Ovary (tissue), 10 donors: ENCODE measurements at regions of chr3 and their contacts with region 1.

Region 1: DNA sequence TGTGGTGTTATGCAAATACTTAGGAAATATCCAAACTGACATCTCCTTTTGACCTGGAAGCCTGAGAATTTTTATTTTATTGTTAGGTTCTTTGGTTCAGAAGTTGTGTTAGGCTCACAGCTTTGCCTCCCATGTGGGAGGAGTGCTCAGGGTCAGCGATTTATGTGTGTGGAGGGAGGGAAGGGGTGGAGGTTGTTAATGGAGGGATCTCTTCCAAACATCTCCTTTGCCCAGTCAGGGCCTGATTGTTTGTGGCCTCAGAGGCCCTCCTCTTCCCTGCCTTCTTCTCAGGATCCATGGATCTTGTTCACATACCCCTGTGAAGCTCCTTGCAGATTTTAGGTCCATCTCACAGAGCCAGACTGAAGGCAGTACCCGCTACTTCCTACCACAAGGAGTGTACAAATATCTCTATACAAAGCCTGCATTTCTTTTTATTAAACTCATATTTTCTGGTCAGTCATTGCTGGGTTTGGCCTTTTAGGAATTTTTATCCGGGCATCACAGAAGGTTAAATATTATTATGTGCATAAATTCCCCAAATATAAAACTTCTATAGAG is 40.3 kb downstream of the BBX start:
- DNase-seq: no peak
- H3K4me3 ChIP-seq: no peak overlapping the region
- H3K27ac ChIP-seq: no peak overlapping the region
- H3K4me1 ChIP-seq: peaks cover 8% of the 10 kb centered on the region
- H3K27me3 ChIP-seq: no peaks in the 10 kb centered on the region
- CTCF ChIP-seq: no peak
- EP300 ChIP-seq: no peak
- POLR2A ChIP-seq: no peak

Region 2: DNA sequence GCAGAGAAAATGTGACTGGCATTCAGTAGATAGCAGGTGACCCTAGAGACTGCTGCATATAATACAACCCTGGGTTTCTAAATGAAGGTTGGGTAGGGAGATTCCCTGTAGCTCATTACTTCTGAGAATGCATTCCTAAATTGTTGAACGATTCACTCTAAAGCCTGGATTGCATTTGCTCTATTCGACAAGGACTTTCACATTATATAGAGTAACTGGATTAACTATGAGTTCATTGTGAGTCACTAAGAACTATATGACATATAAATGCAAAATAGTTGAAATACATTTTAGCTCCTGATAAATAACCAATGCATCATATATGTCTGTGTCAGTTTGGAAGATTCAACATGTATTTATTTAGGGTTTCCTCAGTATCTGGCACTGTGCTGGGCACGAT is 480.5 kb before region 1 on chr3:
- intact Hi-C with region 1: no loop called
- DNase-seq: no peak
- H3K4me3 ChIP-seq: no peak overlapping the region
- H3K27ac ChIP-seq: no peak overlapping the region
- H3K4me1 ChIP-seq: no peaks in the 10 kb centered on the region
- H3K27me3 ChIP-seq: no peaks in the 10 kb centered on the region
- CTCF ChIP-seq: no peak
- EP300 ChIP-seq: no peak
- POLR2A ChIP-seq: no peak

Region 3: DNA sequence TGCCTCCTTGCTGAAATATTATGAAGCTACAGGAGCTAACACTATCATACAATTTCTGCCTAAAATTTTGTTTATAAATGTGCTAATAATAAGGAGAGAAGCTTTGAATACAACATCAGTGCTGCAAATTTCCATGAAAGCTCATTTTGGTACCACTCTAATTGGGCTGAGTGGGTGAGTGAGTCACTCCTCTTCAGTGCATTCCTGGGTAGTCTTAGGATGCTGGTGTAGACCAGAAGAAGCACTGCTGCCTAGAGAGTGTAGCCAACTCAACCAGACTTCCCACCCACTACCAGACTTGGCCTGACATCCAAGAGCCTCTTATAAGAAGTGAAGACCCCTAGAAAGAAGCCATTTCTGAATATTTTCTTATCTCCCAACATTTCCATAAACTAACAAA is 218.3 kb before region 1 on chr3:
- intact Hi-C with region 1: loop called in 1 of 4 experiments (anchors 5 kb)
- DNase-seq: no peak
- H3K4me3 ChIP-seq: no peak overlapping the region
- H3K27ac ChIP-seq: no peak overlapping the region
- H3K4me1 ChIP-seq: no peaks in the 10 kb centered on the region
- H3K27me3 ChIP-seq: no peaks in the 10 kb centered on the region
- CTCF ChIP-seq: no peak
- EP300 ChIP-seq: no peak
- POLR2A ChIP-seq: no peak

Region 4: DNA sequence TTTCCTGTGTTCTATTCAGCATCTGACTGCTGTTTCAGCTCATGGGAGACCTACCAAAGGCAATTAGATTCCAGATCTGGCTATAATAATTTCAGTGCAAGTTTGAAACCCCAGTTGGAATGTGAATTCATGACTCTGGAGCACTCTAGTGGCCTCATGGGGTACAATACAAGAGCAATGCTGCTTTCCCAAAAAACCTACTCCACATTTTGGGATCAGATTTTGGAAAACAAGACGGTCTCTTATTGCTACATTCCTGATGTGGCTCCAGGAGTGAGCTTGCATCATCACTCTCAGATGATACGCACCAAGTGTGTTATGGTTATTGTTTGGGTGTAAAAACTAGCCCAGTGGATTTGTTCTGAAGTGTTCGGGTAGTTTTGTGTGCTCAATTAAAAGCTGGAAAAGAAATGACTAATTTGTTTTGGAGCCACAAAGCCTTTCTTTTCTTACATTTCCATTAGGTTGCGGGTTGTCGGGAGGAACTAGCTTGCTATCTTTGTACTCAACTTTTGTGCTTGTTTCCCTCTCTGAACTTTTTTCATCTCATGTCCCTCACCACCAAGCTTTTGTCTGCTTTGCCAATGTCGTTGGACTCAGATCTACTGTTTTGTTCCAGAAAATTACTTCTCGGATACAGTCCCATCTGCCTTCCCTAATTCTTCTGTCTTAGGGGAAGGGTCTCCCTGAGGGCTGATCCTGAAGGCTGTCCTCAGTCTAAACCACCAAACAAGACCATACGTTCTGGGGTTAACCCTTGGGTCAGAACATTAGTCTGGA is 231.8 kb after region 1 on chr3:
- intact Hi-C with region 1: no loop called
- DNase-seq: peak in 2 of 5 donors; percentile 36 to 60
- H3K4me3 ChIP-seq: no peak overlapping the region
- H3K27ac ChIP-seq: no peak overlapping the region
- H3K4me1 ChIP-seq: peaks cover 2% of the 10 kb centered on the region
- H3K27me3 ChIP-seq: no peaks in the 10 kb centered on the region
- CTCF ChIP-seq: peak in 1 of 3 donors; percentile 15
- EP300 ChIP-seq: no peak
- POLR2A ChIP-seq: no peak

Region 5: DNA sequence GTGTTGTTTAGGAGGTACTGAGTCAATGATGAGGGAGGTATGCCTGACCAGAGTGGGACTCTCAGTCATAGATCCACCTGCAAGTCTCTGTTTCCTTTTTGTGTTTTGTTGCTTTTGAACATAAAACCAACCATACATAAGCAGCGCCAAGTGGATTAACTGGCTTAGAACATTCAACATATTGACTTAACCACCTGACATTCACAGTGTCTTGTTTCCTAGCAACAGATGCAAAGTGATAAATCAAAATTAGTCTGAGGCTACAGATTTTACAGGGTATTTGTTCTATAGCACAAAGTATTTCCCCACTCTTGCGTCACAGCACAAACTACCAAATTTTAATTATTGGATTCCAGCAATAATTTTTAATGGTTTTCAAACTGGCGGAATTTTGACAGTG is 243.5 kb after region 1 on chr3:
- intact Hi-C with region 1: no loop called
- DNase-seq: no peak
- H3K4me3 ChIP-seq: no peak overlapping the region
- H3K27ac ChIP-seq: no peak overlapping the region
- H3K4me1 ChIP-seq: peaks cover 3% of the 10 kb centered on the region
- H3K27me3 ChIP-seq: no peaks in the 10 kb centered on the region
- CTCF ChIP-seq: no peak
- EP300 ChIP-seq: no peak
- POLR2A ChIP-seq: no peak